ENCODE measurements at regions of chr18 and their contacts with region 1.

Region 1: DNA sequence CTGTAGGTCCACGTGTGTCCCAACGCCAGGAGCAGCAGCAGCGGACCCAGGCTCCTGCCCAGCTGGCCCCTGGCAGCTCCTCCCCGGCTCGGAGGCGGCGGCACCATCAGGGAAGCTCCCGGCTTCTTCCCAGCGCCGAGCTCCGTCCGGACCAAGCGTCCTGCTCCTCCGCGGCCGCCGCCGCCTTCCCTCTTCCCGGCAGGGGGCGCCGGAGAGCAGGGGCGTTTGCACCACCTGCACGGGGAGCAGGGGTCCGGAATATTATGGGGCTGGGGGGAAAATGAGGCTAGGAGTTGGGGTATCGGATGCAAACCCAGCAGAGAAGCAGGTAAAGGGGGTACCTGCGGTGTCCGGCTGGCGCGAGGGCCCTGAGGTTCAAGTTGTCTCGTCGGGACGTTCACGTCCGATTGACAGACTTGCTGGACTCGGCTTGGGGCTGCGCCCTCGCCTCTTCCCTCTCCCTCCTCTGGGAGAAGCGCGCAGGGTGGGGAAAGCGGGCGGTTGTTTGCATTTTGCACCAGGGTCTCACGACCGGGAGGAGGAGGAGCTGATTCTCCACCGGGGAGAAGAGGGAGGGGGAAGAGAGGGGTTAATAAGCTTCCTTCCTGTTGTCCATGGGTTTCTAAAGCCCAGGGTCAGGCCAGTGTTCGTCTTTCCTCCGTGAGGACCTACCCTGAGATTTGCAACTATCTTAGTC is at the start of gene CCBE1:
- DNase-seq: peak; percentile 52
- ATAC-seq: peak; percentile 72
- H3K4me3 Mint-ChIP-seq: no peak within 1 kb of the TSS
- H3K27ac Mint-ChIP-seq: no peak within 1 kb of the TSS
- H3K4me1 Mint-ChIP-seq: peaks cover 7% of the 10 kb centered on the region
- H3K27me3 Mint-ChIP-seq: peaks cover 61% of the 10 kb centered on the region
- total RNA-seq, gene CCBE1: not detected

Region 2: GRCh38 chr18:59686260-59686659 is 11.1 kb before region 1 on chr18:
- CTCF ChIA-PET with region 1: interaction called, 15 read pairs
- POLR2A ChIA-PET with region 1: no interaction called
- DNase-seq: no peak
- ATAC-seq: no peak
- H3K4me3 Mint-ChIP-seq: no peak overlapping the region
- H3K27ac Mint-ChIP-seq: no peak overlapping the region
- H3K4me1 Mint-ChIP-seq: no peaks in the 10 kb centered on the region
- H3K27me3 Mint-ChIP-seq: peaks cover 11% of the 10 kb centered on the region

Region 3: GRCh38 chr18:60064271-60064670 is 366.9 kb after region 1 on chr18:
- CTCF ChIA-PET with region 1: no interaction called
- POLR2A ChIA-PET with region 1: no interaction called
- DNase-seq: no peak
- ATAC-seq: no peak
- H3K4me3 Mint-ChIP-seq: no peak overlapping the region
- H3K27ac Mint-ChIP-seq: no peak overlapping the region
- H3K4me1 Mint-ChIP-seq: no peaks in the 10 kb centered on the region
- H3K27me3 Mint-ChIP-seq: no peaks in the 10 kb centered on the region